ENCODE measurements at regions of chr10 and their contacts with region 1.

Region 1: DNA sequence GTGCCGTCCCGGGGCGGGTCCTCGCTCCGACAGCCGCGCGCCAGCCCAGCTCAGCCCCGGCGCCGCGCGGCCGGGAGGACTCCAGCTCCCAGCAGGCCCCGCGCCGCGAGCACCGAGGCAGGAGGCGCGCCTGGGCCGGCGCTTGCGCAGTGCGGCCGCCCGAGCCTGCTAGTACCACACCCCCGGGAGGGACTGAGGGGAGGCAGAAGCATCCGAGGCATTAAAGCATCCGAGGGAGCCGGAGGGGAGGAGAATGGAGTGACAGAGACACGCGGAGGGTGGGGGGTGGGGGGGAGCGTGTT is at the start of gene GRK5:
- DNase-seq: peak; percentile 92 to 96 (median 96)
- H3K4me3 ChIP-seq: peak within 1 kb of the TSS; percentile 55 to 85 (median 77)
- H3K27ac ChIP-seq: peak within 1 kb of the TSS in 1 of 2 experiments; percentile 59
- H3K4me1 ChIP-seq: peaks cover 18 to 49% (median 47%) of the 10 kb centered on the region in 4 experiments
- H3K27me3 ChIP-seq: peaks cover 0 to 18% (median 3%) of the 10 kb centered on the region in 5 experiments

Region 2: GRCh38 chr10:119103903-119104652 is 103.2 kb before region 1 on chr10 and contains the start of gene DENND10:
- CTCF ChIA-PET with region 1: no interaction called
- POLR2A ChIA-PET with region 1: no interaction called
- DNase-seq: peak; percentile 73 to 77 (median 75)
- H3K4me3 ChIP-seq: peak within 1 kb of the TSS; percentile 65 to 89 (median 80)
- H3K27ac ChIP-seq: no peak within 1 kb of the TSS
- H3K4me1 ChIP-seq: peaks cover 4 to 19% (median 11%) of the 10 kb centered on the region in 4 experiments
- H3K27me3 ChIP-seq: no peaks in the 10 kb centered on the region

Region 3: DNA sequence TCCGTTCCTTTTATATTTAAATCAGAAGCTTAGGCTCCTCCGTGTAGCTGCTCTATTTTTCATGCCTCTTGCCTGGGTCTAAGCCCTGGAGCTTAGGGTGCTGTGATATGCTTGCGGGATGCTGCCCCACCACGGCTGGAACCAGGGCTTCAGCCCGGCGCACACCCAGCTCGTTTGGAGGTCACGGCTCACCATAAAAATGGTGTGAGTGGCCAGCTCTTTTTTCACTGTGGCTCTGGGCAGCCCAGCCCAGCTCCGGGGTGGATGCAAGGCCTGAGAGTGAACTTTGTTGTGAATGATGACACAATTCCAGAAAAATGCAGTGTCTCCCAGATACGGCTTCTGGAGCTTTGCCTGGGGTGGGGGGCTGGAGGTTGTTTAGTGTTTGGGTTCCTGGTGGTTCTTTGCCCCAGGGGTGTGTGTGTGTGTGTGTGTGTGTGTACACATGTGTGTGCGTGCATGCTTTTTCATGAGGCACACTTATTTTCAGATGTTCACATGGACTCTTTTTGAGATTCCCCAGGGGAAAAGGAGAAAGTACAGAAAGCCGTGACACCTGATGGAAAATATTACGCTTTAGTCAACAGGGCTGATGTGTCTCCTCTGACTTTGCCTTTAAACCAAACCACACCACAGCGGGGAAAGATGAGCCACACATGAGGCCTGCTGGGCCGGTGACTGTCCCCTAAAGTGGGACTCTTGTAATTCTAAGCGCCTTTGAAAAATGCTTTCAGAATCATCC is 46.3 kb after region 1 on chr10:
- CTCF ChIA-PET with region 1: interaction called, 16 read pairs
- POLR2A ChIA-PET with region 1: no interaction called
- DNase-seq: no peak
- H3K4me3 ChIP-seq: no peak overlapping the region
- H3K27ac ChIP-seq: no peak overlapping the region
- H3K4me1 ChIP-seq: peaks cover 0 to 7% (median 4%) of the 10 kb centered on the region in 4 experiments
- H3K27me3 ChIP-seq: no peaks in the 10 kb centered on the region

Region 4: GRCh38 chr10:119270762-119271366 is 63.5 kb after region 1 on chr10:
- CTCF ChIA-PET with region 1: interaction called, 16 read pairs
- POLR2A ChIA-PET with region 1: interaction called, 6 read pairs
- DNase-seq: peak in 1 of 3 donors; percentile 92
- H3K4me3 ChIP-seq: peak overlapping the region in 6 of 7 experiments; percentile 33 to 70 (median 45)
- H3K27ac ChIP-seq: no peak overlapping the region
- H3K4me1 ChIP-seq: peaks cover 10 to 38% (median 31%) of the 10 kb centered on the region in 4 experiments
- H3K27me3 ChIP-seq: no peaks in the 10 kb centered on the region

Region 5: DNA sequence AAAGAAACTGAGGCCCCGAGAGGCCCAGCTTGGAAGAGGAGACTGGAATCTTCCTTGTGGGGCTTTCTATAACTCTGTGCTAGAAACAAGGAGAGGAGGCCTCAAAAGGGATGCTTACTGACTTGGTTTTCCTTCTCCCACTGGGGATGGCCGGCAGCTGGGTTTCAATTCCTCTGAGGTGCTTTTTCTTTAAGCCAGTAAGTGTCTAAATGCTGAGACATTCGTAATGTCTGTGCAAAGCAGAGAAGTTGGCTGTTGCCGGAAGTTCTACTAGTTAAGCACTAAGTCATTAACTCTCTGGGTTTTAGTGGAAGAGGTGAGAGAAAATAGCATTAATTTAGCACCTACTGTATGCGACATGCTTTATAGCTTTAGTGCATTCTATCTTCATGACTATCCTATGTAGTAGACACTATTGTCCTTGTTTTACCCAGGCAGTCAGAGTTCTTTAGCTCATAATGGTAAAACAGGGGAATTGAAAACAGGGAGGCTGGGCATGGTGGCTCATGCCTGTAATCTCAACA is 200.0 kb after region 1 on chr10:
- CTCF ChIA-PET with region 1: interaction called, 154 read pairs
- POLR2A ChIA-PET with region 1: no interaction called
- DNase-seq: no peak
- H3K4me3 ChIP-seq: no peak overlapping the region
- H3K27ac ChIP-seq: no peak overlapping the region
- H3K4me1 ChIP-seq: peaks cover 5 to 16% (median 9%) of the 10 kb centered on the region in 4 experiments
- H3K27me3 ChIP-seq: no peaks in the 10 kb centered on the region

Region 6: DNA sequence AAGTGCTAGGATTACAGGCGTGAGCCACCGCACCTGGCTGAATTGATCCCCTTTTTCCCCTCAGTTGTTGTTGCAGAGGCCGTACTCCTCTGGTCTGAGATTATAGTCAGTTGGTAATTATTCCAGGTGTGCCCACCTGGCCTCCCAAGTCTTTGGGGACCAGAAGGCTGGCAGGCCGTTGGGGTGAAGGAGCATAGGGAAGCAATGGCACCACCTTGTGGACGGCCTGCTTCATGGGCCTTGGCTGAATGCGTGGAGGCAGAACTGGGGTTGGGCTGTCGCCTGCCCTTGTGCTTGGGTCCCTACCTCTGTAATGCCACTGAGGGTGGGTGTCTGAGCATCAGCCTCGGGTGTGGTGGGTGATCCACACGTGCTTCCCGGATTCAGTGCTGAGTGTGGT is 209.5 kb after region 1 on chr10:
- CTCF ChIA-PET with region 1: interaction called, 154 read pairs
- POLR2A ChIA-PET with region 1: no interaction called
- DNase-seq: peak; percentile 71 to 83 (median 75)
- H3K4me3 ChIP-seq: no peak overlapping the region
- H3K27ac ChIP-seq: no peak overlapping the region
- H3K4me1 ChIP-seq: peaks cover 0 to 10% (median 4%) of the 10 kb centered on the region in 4 experiments
- H3K27me3 ChIP-seq: peaks cover 0 to 8% (median 0%) of the 10 kb centered on the region in 5 experiments

Measured in common myeloid progenitor, CD34-positive (primary cell).